ENCODE measurements at regions of chr2 and their contacts with region 1.

Region 1: GRCh38 chr2:43412121-43412753 is 183.6 kb downstream of the THADA start:
- DNase-seq: peak; percentile 25
- H3K4me3 ChIP-seq: no peak overlapping the region
- H3K27ac ChIP-seq: no peak overlapping the region
- H3K4me1 ChIP-seq: peaks cover 8% of the 10 kb centered on the region
- H3K27me3 ChIP-seq: no peaks in the 10 kb centered on the region
- CTCF ChIP-seq: no peak

Region 2: DNA sequence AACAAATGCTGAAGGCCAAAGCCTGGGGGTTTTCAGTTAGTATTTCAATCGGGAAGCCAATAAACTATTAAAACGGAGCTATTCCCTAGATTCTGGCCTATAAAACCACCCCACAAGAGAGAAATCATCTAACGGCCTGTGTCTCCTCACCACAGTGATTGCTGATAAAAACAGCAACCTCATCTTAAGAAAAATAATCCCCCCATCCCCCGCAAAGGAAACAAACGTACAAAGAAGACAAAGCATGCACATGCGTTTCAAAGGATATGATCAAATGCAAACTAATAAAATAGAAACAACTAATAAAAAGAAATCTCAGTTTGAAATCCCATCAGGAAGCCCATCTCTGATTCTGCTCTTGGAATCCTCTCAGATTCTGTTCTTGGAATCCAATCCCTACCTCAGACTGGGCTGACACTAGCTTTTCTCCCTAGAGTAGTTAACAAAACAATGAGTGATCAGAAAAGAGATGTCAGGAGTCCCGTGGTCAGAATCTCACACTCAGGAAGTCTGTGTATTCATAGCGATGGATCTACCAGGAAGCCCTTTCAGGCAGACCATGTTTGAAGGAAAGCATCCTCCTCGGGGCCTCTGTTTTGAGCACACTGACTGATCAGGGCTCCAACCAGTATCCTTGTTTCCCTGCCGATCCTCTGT is 32.9 kb after region 1 on chr2:
- CTCF ChIA-PET with region 1: no interaction called
- dilution Hi-C with region 1: loop called (anchors 5 kb)
- in situ Hi-C with region 1: no loop called
- intact Hi-C with region 1: no loop called
- DNase-seq: no peak
- H3K4me3 ChIP-seq: no peak overlapping the region
- H3K27ac ChIP-seq: no peak overlapping the region
- H3K4me1 ChIP-seq: no peaks in the 10 kb centered on the region
- H3K27me3 ChIP-seq: no peaks in the 10 kb centered on the region
- CTCF ChIP-seq: no peak

Region 3: DNA sequence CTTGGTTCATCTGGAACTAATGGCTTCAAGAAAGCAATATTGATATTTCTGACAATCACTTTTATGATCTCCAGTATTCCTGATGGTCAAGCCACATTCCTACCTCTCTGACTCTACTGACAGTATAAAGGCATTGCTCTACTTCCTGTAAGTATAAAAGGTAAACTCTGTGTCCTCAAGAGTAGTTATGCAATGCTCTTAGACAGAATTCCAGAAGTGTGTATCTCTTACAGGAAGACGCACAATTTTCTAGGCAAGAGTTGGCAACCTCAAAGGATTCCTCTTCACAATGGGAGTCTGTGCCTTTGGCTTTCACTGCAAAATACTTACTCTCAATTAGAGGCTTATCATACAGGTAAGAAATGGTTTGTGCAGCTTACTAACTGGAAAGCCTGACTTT is 83.5 kb after region 1 on chr2:
- CTCF ChIA-PET with region 1: no interaction called
- dilution Hi-C with region 1: no loop called
- in situ Hi-C with region 1: no loop called
- intact Hi-C with region 1: no loop called
- DNase-seq: peak; percentile 75
- H3K4me3 ChIP-seq: no peak overlapping the region
- H3K27ac ChIP-seq: no peak overlapping the region
- H3K4me1 ChIP-seq: peaks cover 25% of the 10 kb centered on the region
- H3K27me3 ChIP-seq: no peaks in the 10 kb centered on the region
- CTCF ChIP-seq: no peak

Measured in mammary epithelial cell (primary cell).